ENCODE measurements at regions of chr1 and their contacts with region 1.

Region 1: DNA sequence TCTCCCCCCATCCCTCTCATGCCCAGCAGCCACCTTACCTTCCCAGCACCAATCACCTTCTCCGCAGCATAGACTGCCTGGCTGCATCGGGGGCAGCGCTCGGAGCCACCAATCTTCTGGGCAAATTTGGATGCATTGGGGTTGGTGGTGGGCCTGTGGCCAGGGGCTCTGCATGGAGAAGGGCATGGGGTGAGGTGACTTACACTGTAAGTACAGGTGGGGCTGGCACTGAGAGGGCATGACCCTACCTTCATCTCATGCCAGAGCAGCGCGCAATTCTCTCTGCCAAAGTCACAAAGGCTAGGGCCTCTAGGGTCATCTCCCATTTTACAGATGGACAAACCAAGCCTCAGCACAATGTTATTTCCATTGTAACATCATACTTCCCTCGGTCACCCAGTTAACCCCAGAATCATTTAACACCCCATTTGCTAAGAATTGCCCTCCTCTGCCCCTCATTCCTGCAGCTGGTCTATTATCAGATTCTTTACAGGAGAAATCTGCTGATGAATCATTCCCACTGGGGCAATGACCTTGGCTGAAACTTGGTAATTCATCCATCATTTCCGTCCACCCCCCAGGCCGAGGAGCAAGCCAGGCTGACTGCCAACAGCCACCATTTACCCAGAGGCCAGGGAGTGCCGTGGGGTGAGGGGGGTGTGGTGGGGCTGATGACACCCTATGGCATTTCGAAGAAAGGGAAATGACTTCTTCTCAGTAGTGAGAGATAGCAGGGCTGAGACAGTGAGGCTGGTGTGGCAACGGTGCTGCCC is 17.9 kb downstream of the CSRP1 start:
- H3K4me3 Mint-ChIP-seq: peak overlapping the region; percentile 40
- H3K27ac Mint-ChIP-seq: peak overlapping the region; percentile 89
- H3K4me1 Mint-ChIP-seq: peaks cover 55% of the 10 kb centered on the region
- H3K27me3 Mint-ChIP-seq: no peaks in the 10 kb centered on the region

Region 2: GRCh38 chr1:201506556-201507359 is 17.8 kb after region 1 on chr1 and contains the start of gene CSRP1:
- intact Hi-C with region 1: loop called (anchors 2 kb)
- H3K4me3 Mint-ChIP-seq: peak within 1 kb of the TSS; percentile 88
- H3K27ac Mint-ChIP-seq: peak within 1 kb of the TSS; percentile 77
- H3K4me1 Mint-ChIP-seq: peaks cover 68% of the 10 kb centered on the region
- H3K27me3 Mint-ChIP-seq: no peaks in the 10 kb centered on the region

Measured in dendritic cell treated with granulocyte-macrophage colony-stimulating factor and Interleukin-4, amounts not matched to agents 40 ng/mL and 50 ng/mL, for 4 days (primary cell).